Mammary epithelial cell (primary cell): ENCODE measurements at regions of chr3 and their contacts with region 1.

Region 1: DNA sequence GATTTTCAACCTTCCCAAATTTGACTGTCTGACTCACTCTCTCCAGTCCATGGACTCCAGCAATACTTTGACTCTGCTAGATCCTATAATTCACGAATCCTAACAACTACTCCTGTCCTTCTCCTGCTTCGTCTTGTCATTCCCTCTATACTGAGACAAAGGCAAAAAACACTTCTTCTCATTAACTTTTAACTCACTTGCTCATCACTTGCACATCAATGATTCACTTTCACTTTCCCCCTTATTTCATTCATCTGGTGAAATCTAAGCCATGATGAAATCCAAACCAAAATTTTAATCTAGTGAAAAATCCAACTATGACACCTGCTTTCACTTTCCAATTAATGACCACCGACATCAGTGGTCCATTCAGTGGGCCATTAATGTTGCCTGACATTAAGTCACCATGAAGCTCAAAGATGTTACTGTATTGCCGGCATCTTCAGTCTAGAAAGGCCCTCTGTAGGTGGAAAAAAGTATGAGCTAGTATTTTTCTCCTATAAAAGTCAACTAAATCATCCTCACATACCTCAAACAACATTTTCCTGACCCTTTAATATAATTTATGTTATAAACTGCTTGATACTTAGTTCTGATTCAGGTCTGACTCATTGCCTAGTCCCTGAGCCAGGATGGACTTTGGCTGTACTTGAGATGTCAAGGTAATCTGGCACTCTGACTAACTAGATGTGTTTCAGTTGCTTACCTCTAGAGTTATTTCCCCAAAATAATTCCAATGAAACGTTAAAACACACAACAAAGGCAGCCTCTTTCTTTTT is 158.6 kb downstream of the CNTN6 start:
- DNase-seq: no peak
- H3K4me3 ChIP-seq: no peak overlapping the region
- H3K27ac ChIP-seq: no peak overlapping the region
- H3K4me1 ChIP-seq: no peaks in the 10 kb centered on the region
- H3K27me3 ChIP-seq: no peaks in the 10 kb centered on the region
- CTCF ChIP-seq: peak in 1 of 2 donors; percentile 13

Region 2: GRCh38 chr3:1082108-1082507 is 169.4 kb before region 1 on chr3:
- CTCF ChIA-PET with region 1: interaction called, 3 read pairs
- dilution Hi-C with region 1: no loop called
- in situ Hi-C with region 1: no loop called
- intact Hi-C with region 1: loop called (anchors 1 kb)
- DNase-seq: peak; percentile 27
- H3K4me3 ChIP-seq: no peak overlapping the region
- H3K27ac ChIP-seq: no peak overlapping the region
- H3K4me1 ChIP-seq: no peaks in the 10 kb centered on the region
- H3K27me3 ChIP-seq: no peaks in the 10 kb centered on the region
- CTCF ChIP-seq: peak; percentile 67 to 80

Region 3: DNA sequence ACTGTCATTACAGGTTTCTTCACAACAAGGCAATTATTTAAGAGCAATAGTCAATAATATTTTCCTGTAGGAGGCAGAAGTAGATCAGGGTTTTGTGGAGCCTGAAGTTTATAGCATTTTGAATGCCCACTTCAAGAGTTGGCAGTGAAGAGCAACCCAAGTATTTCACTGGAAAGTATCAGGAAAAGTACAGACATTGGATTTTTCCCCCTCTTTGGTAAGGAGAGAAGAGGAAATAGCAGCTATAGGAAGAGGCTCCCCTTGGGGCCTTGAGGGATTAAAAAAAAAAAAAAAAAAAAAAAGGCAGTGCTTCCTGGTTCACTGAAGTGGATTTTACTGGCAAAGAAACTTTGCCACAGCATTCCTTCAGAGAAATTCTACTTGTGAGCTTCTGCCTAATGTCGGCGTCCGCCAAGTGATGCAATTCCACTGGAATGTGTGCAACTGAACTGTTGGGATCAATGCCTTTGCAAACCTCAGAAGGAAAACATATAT is 164.4 kb before region 1 on chr3:
- CTCF ChIA-PET with region 1: interaction called, 3 read pairs
- dilution Hi-C with region 1: no loop called
- in situ Hi-C with region 1: no loop called
- intact Hi-C with region 1: loop called (anchors 1 kb)
- DNase-seq: peak; percentile 33
- H3K4me3 ChIP-seq: no peak overlapping the region
- H3K27ac ChIP-seq: no peak overlapping the region
- H3K4me1 ChIP-seq: no peaks in the 10 kb centered on the region
- H3K27me3 ChIP-seq: no peaks in the 10 kb centered on the region
- CTCF ChIP-seq: peak; percentile 12 to 39